ENCODE measurements at regions of chr15 and their contacts with region 1.

Region 1: DNA sequence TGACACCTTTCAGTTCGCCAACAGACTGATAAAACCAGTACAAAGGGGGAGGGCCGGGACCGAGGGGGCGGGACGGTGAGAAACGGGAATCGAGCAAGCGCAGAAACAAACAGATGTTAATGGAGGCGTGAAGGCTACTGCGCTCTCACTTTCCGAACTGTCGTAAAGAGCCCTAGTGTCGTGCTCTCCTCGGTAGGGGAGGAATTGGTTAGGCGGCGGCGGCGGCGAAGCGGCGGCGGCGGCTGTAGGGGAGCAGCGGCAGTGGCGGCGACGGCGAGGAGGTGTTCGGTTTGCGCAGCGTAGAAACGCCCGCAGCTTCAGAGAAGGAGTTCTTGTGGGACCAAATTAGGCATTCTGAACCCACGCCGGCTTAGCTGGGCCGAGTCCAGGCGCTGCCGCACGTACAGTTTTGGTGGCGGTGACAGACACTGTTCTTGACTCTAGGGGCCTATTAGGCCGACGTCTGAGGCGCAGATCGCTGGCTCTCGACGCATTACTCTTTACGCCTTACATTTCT is at the start of gene RNF111:
- DNase-seq: peak; percentile 85
- H3K4me3 Mint-ChIP-seq: peak within 1 kb of the TSS; percentile 96
- H3K27ac Mint-ChIP-seq: peak within 1 kb of the TSS; percentile 94
- H3K4me1 Mint-ChIP-seq: peaks cover 47% of the 10 kb centered on the region
- H3K27me3 Mint-ChIP-seq: peaks cover 4% of the 10 kb centered on the region
- total RNA-seq, gene RNF111: 35.3 and 38.0 TPM in 2 replicates

Region 2: DNA sequence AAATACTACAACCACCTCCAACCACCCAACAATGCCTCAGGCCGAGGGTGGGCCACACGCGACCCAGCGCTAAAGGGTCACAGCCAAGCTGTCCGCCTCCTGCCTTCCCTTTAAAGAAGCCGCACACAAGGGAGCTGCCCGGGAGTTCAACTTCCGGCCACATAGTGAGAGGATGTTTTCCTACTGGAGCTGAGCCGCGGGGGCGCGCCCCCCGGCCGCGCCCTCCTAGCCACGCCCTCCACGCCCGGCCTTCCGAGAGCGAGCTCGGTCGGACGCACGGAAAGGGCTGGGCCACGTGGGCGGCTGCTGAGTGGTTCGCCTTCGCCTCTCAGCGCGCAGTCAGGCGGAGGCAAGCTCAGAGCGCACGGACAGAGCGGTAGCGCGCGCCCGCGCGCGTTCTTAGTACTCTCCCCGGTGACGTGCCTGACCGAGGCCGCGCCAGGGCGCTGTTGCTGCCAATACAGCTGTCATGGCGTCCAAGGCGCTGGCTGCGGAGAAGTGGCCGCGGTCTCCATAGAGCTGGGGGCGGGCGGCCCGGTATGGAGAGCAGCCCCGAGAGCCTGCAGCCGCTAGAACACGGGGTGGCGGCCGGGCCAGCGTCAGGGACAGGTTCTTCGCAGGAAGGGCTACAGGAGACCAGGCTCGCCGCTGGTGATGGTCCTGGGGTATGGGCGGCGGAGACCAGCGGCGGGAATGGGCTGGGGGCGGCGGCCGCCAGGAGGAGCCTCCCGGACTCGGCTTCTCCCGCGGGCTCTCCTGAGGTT is 216.5 kb before region 1 on chr15 and contains the start of gene MINDY2:
- intact Hi-C with region 1: loop called (anchors 5 kb)
- DNase-seq: peak; percentile 94
- H3K4me3 Mint-ChIP-seq: no peak within 1 kb of the TSS
- H3K27ac Mint-ChIP-seq: peak within 1 kb of the TSS; percentile 88
- H3K4me1 Mint-ChIP-seq: peaks cover 9% of the 10 kb centered on the region
- H3K27me3 Mint-ChIP-seq: no peaks in the 10 kb centered on the region
- total RNA-seq, gene MINDY2: 9.0 and 9.7 TPM in 2 replicates

Region 3: DNA sequence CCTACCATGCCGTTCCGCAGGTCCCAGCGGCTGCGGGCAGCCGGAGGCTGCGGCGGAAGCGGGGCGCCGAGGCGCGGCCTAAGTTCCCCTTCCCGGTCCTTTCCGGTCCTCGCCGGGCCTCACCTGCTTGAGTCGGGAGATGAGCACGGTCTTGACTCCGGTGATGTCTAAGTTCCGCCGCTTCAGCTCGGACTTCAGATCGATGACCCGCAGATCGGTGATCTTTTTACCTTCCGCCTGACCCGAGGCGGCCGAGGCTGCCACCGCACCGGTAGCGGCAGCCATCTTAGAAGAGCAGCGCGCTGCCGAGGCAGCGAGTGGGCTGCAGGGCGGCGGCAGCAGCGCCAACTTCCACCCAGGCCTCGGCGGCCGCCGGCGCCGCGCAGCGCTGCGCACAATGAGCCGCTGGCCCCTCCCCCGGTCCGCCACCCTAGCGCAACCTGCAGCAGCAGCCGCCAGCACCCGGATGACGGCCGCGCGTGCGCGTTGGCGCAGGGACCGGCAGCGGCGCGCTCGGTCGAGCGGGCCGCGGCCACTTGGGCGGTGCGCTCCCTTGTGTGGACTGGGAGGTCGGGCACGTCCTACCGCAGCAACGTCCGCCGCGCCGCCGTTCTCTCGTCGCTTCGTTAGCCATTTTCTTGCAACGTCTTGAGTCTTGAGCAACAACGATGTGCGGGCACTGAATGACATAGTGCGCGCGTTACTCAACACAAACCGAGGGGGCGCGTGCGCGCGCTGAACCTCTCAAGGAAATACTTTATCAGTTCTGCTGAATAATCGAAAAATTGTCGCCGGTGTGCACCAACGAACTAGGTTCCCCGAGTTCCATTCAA is 54.0 kb before region 1 on chr15 and contains the start of gene SLTM:
- intact Hi-C with region 1: loop called (anchors 1 kb)
- DNase-seq: peak; percentile 88
- H3K4me3 Mint-ChIP-seq: peak within 1 kb of the TSS; percentile 98
- H3K27ac Mint-ChIP-seq: peak within 1 kb of the TSS; percentile 100
- H3K4me1 Mint-ChIP-seq: peaks cover 34% of the 10 kb centered on the region
- H3K27me3 Mint-ChIP-seq: no peaks in the 10 kb centered on the region
- total RNA-seq, gene SLTM: 142 and 143 TPM in 2 replicates

Region 4: GRCh38 chr15:59039225-59039624 is 51.7 kb after region 1 on chr15:
- intact Hi-C with region 1: loop called (anchors 5 kb)
- DNase-seq: no peak
- H3K4me3 Mint-ChIP-seq: peak overlapping the region; percentile 23
- H3K27ac Mint-ChIP-seq: peak overlapping the region; percentile 66
- H3K4me1 Mint-ChIP-seq: peaks cover 31% of the 10 kb centered on the region
- H3K27me3 Mint-ChIP-seq: no peaks in the 10 kb centered on the region

Region 5: GRCh38 chr15:59063042-59063441 is 75.5 kb after region 1 on chr15:
- intact Hi-C with region 1: no loop called
- DNase-seq: no peak
- H3K4me3 Mint-ChIP-seq: no peak overlapping the region
- H3K27ac Mint-ChIP-seq: peak overlapping the region; percentile 11
- H3K4me1 Mint-ChIP-seq: peaks cover 15% of the 10 kb centered on the region
- H3K27me3 Mint-ChIP-seq: no peaks in the 10 kb centered on the region

Region 6: DNA sequence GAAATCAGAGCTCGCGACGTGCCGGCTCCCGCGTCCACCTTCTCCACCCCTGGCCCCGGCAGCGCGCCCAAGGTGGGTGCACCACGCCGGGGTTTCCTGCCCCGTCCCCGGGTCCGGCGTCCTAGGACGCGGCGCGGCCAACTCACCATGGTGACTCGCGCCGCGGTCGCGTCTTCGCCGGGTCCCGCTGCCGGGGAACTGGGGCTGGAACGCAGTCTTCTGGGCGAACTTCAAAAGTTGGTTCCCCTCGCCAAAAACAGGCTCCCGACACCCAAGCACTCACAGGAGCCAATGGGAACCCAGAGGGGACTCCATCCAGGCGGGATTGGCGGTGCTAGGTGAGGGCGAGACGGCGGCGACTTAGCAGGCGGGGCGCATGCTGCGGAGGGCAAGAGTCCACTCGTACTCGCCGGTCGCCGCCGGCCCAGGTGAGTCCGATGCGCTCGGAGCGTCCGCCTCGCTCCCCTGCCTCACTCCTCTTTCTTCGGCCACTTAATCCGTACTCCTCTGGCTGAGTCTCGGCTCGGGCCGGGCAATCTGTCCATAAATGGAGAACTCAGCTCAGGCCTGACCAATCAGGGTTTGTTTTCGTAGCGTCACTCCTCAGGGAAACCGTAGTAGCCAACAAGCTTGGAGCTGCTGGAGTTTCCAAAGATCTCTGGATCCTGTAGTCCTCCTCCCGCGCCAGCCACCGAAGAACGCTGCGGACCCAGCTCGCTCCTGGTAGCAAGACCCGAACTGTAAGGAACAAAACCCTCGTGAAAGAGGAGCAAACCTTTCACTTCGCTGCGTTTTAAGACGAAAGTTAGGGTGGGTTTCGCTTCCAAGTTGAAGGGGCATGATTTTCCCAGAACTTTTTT is 385.0 kb after region 1 on chr15 and contains the start of gene MYO1E:
- intact Hi-C with region 1: loop called (anchors 5 kb)
- DNase-seq: peak; percentile 34
- H3K4me3 Mint-ChIP-seq: peak within 1 kb of the TSS; percentile 96
- H3K27ac Mint-ChIP-seq: peak within 1 kb of the TSS; percentile 79
- H3K4me1 Mint-ChIP-seq: peaks cover 42% of the 10 kb centered on the region
- H3K27me3 Mint-ChIP-seq: peaks cover 31% of the 10 kb centered on the region
- total RNA-seq, gene MYO1E: 33.3 and 33.6 TPM in 2 replicates

Region 7: GRCh38 chr15:59656897-59657634 is 669.5 kb after region 1 on chr15 and contains the start of gene GTF2A2:
- intact Hi-C with region 1: loop called (anchors 1 kb)
- DNase-seq: peak; percentile 93
- H3K4me3 Mint-ChIP-seq: no peak within 1 kb of the TSS
- H3K27ac Mint-ChIP-seq: peak within 1 kb of the TSS; percentile 79
- H3K4me1 Mint-ChIP-seq: no peaks in the 10 kb centered on the region
- H3K27me3 Mint-ChIP-seq: no peaks in the 10 kb centered on the region
- total RNA-seq, gene GTF2A2: 189 and 197 TPM in 2 replicates

Measured in activated T-helper 1 cell treated with anti-CD3 and anti-CD28 coated beads, Interleukin-12 subunit alpha, Interleukin-12 subunit beta, Interleukin-2, Interleukin-4 antibody, amounts not matched to agents 30 ng/mL and 10 ng/mL and 1 ng/mL, durations not matched to agents 14 hours and 24 hours and 36 hours (primary cell).